ENCODE measurements at regions of chr1 and their contacts with region 1.

Region 1: GRCh38 chr1:15835741-15836510 is 11.6 kb upstream of the SPEN start:
- DNase-seq: peak; percentile 99
- H3K4me3 ChIP-seq: peak overlapping the region; percentile 67 to 85 (median 76)
- H3K27ac ChIP-seq: peak overlapping the region; percentile 95 to 100 (median 100)
- H3K4me1 ChIP-seq: peaks cover 20 to 39% (median 37%) of the 10 kb centered on the region in 4 donors
- H3K27me3 ChIP-seq: peaks cover 0 to 3% (median 0%) of the 10 kb centered on the region in 4 donors
- CTCF ChIP-seq: no peak
- EP300 ChIP-seq: no peak
- POLR2A ChIP-seq: peak; percentile 44

Region 2: GRCh38 chr1:15848957-15849774 is 13.2 kb after region 1 on chr1:
- intact Hi-C with region 1: loop called (anchors 2 kb)
- DNase-seq: peak; percentile 96
- H3K4me3 ChIP-seq: peak overlapping the region; percentile 76 to 95 (median 95)
- H3K27ac ChIP-seq: peak overlapping the region; percentile 95 to 100 (median 98)
- H3K4me1 ChIP-seq: peaks cover 46 to 71% (median 68%) of the 10 kb centered on the region in 4 donors
- H3K27me3 ChIP-seq: no peaks in the 10 kb centered on the region
- CTCF ChIP-seq: no peak
- EP300 ChIP-seq: no peak
- POLR2A ChIP-seq: no peak

Region 3: GRCh38 chr1:15949453-15950245 is 113.7 kb after region 1 on chr1:
- intact Hi-C with region 1: loop called (anchors 5 kb)
- DNase-seq: peak; percentile 98
- H3K4me3 ChIP-seq: peak overlapping the region; percentile 40 to 56 (median 44)
- H3K27ac ChIP-seq: peak overlapping the region; percentile 95 to 96 (median 96)
- H3K4me1 ChIP-seq: peaks cover 66 to 71% (median 71%) of the 10 kb centered on the region in 4 donors
- H3K27me3 ChIP-seq: no peaks in the 10 kb centered on the region
- CTCF ChIP-seq: no peak
- EP300 ChIP-seq: no peak
- POLR2A ChIP-seq: peak; percentile 7

Region 4: DNA sequence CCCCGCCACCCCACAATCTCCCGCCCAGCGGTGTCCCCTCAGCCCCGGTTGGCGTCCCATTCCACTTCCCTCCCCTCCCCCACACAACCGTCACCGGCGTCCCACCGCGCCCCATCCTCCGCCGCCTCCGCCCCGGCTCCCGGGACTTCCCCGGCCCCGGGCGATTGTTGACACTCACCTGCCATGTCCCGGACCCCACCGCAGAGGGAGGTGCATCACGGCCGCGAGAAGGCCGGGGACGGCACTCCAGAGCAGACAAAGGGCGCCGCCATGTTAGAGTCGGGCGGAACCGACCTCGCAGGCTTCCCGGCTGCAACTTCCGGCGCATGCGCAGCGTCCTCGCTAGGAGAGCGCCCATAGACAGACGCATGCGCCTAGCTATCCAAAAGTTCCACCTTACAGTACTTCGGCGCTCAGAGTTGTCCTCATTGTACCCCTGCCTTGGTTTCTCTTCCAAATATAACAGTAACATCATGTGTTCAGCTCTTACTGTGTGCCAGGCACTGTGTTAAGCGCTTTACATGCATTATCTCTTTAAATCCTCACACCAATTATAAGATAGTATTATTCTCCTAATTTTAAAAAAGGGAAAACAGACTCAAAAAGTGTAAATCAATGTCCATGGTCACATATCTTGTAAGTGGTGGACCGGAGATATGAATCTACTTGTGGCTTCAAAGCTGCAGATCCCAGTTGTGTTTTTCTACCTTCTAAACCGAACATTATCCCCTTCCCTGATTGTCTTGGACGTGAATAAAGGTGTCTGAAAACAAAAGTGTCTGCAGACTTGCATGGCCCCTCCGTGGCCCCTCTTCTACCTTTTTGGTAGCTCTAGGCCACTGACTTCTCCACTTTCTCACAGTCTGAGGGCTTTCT is 140.1 kb after region 1 on chr1 and contains the start of gene ZBTB17:
- intact Hi-C with region 1: loop called (anchors 5 kb)
- DNase-seq: peak; percentile 98
- H3K4me3 ChIP-seq: peak within 1 kb of the TSS; percentile 75 to 98 (median 84)
- H3K27ac ChIP-seq: peak within 1 kb of the TSS; percentile 80 to 89 (median 86)
- H3K4me1 ChIP-seq: peaks cover 10 to 32% (median 30%) of the 10 kb centered on the region in 4 donors
- H3K27me3 ChIP-seq: no peaks in the 10 kb centered on the region
- CTCF ChIP-seq: no peak
- EP300 ChIP-seq: no peak
- POLR2A ChIP-seq: peak; percentile 79
- total RNA-seq, gene ZBTB17: 29.5 to 40.8 (median 34.6) TPM